ENCODE measurements at regions of chr1 and their contacts with region 1.

Region 1: DNA sequence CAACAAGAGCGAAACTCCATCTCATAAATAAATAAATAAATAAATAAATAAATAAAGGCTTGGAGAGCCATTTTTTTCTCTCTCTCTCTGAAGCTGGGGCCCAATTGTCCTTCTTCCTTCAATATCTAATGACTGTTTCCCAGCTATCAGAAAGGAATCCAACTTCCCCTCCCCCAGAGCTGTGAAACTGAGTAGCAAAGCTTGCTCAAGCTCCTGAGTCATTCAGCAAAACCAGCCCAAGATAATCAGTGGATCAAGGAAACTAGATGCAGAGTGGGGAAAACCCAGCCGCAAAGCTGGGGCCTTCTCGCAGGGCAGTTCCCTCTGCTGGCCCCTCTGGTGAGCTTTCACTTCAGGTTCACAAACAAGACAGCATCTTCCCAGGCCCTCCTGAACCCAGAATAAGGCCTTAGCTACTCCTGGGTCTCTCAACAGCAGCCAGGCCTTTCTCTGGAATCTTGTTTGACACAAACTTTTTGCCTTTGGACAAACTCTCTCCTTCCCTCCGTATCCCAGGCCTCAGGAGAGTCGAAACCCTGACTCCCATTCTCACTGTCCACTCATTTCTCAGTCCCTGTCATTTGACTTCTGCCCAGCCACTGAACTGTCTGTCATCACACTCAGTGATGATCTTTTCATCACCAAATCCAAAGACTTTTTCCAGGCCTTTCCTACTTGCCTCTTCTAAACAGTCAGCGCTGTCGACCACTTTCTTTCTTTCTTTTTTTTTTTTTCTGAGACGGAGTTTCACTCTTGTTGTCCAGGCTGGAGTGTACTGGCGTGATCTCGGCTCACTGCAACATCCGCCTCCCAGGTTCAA is 18.0 kb upstream of the PTP4A2 start:
- DNase-seq: peak; percentile 88 to 100
- H3K4me3 ChIP-seq: peak overlapping the region; percentile 36; the same call in 1 of the 2 replicates
- H3K27ac ChIP-seq: peak overlapping the region; percentile 98
- H3K4me1 ChIP-seq: peaks cover 65% of the 10 kb centered on the region
- H3K27me3 ChIP-seq: no peaks in the 10 kb centered on the region
- CTCF ChIP-seq: peak; percentile 62

Region 2: DNA sequence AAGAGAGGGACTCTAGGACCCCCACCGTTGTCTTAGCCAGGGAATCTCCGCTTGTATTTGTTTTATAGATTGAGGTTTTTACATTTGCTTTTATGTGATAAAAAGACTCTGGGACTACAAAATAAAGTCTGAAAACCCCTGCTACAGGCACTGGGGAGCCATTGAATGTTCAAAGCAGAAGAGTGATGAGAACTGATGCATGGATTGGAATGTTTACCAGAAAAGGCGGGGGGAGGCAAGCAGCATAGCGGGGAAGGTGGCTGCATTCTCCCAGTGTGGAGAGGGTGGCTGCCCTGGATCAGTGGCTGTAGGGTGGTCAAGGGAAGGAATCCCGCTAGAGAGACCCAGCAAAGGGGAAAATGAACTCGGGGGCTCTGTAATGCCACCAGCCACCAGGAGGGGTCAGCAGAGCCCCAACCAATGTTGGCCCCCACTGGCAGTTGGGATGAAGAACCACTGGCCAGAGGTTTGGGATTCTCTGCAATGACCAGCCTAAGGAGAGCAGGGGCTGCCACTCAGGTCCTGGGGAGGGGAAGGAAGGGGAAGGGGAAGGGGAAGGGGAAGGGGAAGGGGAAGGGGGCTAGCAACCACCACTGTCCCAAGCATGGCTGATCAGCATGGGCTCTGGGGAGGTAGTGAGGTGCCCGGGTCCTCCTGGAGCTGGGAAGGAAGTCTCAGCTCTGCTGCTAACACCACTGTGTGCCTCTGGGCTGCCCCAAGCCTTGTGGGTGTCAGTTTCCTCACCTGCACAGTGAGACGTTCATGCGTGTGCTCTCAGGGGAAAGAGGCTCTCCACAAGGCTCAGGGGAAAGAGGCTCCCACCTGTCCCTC is 292.3 kb before region 1 on chr1:
- CTCF ChIA-PET with region 1: no interaction called
- POLR2A ChIA-PET with region 1: no interaction called
- intact Hi-C with region 1: loop called (anchors 5 kb)
- DNase-seq: peak in 1 of 2 experiments; percentile 67
- H3K4me3 ChIP-seq: no peak overlapping the region
- H3K27ac ChIP-seq: no peak overlapping the region
- H3K4me1 ChIP-seq: peaks cover 18% of the 10 kb centered on the region
- H3K27me3 ChIP-seq: no peaks in the 10 kb centered on the region
- CTCF ChIP-seq: peak; percentile 100

Region 3: GRCh38 chr1:31701137-31701736 is 254.9 kb before region 1 on chr1:
- CTCF ChIA-PET with region 1: no interaction called
- POLR2A ChIA-PET with region 1: no interaction called
- intact Hi-C with region 1: no loop called
- DNase-seq: peak; percentile 87 to 91
- H3K4me3 ChIP-seq: no peak overlapping the region
- H3K27ac ChIP-seq: peak overlapping the region; percentile 25
- H3K4me1 ChIP-seq: peaks cover 50% of the 10 kb centered on the region
- H3K27me3 ChIP-seq: no peaks in the 10 kb centered on the region
- CTCF ChIP-seq: no peak

Region 4: DNA sequence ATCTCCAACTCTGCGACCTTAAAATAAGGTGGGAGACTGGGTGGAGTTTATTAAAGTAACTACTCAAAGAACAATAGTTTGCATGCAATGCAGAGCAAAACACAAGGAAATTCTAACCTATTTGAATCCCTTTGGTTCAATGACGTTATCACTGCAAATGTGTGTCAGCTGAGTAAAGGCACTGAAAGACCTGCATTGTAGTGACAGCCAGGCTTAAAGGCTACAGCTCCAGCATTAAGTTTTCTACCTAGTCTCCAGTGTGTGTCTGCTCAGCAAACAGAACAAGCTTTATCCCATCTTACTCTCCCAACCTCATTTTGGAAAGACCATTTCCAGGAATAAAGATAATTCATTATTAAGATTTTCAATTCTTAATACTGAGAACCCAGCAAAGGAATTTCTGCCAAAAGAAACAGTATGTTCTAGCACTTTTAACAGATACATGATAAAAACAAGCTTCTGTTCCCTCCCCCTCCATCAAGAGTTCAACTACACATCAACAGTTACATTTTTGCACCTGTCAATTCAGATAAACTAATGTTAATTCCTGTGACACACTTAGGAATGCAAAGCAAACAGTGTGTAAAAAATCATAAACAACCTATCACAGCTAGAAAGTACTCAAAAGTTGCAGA is 32.1 kb before region 1 on chr1:
- CTCF ChIA-PET with region 1: no interaction called
- POLR2A ChIA-PET with region 1: interaction called, 11 read pairs
- intact Hi-C with region 1: loop called (anchors 5 kb)
- DNase-seq: no peak
- H3K4me3 ChIP-seq: no peak overlapping the region
- H3K27ac ChIP-seq: peak overlapping the region; percentile 8; the same call in 1 of the 2 replicates
- H3K4me1 ChIP-seq: peaks cover 78% of the 10 kb centered on the region
- H3K27me3 ChIP-seq: no peaks in the 10 kb centered on the region
- CTCF ChIP-seq: no peak

Region 5: DNA sequence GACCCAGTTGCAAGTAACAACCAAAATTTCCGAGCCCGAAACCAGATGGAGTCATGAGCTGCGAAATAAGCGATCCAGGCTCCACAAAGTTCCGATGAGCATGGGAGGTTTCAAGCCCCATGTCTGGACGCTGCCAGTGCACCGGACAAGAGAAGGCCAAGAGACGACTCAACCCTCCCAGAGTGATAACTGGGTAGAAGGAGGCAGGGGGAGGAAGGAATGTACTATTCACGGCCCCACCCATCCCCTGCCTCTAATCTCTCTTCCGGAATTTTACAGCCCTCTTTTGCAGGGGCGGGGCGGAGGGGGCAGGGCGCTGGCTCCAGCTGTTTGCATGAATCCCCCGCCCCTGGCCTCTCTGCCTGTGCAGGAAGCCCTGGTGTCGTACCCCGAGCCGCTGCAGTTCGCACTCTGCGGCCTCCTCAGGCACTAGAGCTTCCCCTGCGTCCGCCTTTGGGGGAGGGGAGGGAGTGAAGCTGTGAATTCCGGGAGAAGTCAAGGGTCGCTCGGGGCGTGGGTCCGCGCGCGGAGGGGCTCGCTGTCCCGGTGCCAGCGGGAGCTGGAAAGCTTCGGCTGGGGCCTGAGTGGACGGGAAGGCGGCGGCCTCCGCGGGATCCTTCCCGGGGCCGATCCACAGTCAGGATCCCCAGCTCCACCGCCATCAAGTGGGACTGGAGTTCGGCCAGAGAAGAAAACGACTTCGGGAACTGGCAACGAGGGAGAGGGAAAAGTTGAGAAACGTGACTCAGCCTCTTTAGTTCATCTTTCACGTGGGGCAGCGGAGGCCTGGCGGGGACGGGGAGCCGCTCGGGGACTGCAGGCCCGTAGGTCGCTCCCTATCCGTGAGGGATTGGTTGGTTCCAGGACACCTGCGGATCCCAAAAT is 11.7 kb before region 1 on chr1:
- CTCF ChIA-PET with region 1: interaction called, 9 read pairs
- POLR2A ChIA-PET with region 1: interaction called, 11 read pairs
- intact Hi-C with region 1: loop called (anchors 1 kb)
- DNase-seq: peak; percentile 90 to 93
- H3K4me3 ChIP-seq: peak overlapping the region; percentile 62
- H3K27ac ChIP-seq: peak overlapping the region; percentile 95
- H3K4me1 ChIP-seq: peaks cover 66% of the 10 kb centered on the region
- H3K27me3 ChIP-seq: no peaks in the 10 kb centered on the region
- CTCF ChIP-seq: peak; percentile 22; the same call in 1 of the 2 replicates

Measured in PC-9 (cell line).